MCF 10A (cell line): ENCODE measurements at regions of chr3 and their contacts with region 1.

Region 1: GRCh38 chr3:120095226-120095978 is 1.2 kb upstream of the GSK3B start:
- DNase-seq: peak; percentile 94
- H3K4me3 Mint-ChIP-seq: no peak overlapping the region
- H3K27ac Mint-ChIP-seq: no peak overlapping the region
- H3K4me1 Mint-ChIP-seq: peaks cover 13% of the 10 kb centered on the region
- H3K27me3 Mint-ChIP-seq: no peaks in the 10 kb centered on the region
- CTCF ChIP-seq: no peak

Region 2: GRCh38 chr3:119831022-119831421 is 264.4 kb before region 1 on chr3:
- CTCF ChIA-PET with region 1: no interaction called
- POLR2A ChIA-PET with region 1: no interaction called
- intact Hi-C with region 1: loop called (anchors 5 kb)
- DNase-seq: peak; percentile 10
- H3K4me3 Mint-ChIP-seq: no peak overlapping the region
- H3K27ac Mint-ChIP-seq: no peak overlapping the region
- H3K4me1 Mint-ChIP-seq: no peaks in the 10 kb centered on the region
- H3K27me3 Mint-ChIP-seq: no peaks in the 10 kb centered on the region
- CTCF ChIP-seq: no peak

Region 3: GRCh38 chr3:120081719-120082118 is 13.7 kb before region 1 on chr3:
- CTCF ChIA-PET with region 1: interaction called, 3 read pairs
- POLR2A ChIA-PET with region 1: interaction called, 31 read pairs
- intact Hi-C with region 1: no loop called
- DNase-seq: no peak
- H3K4me3 Mint-ChIP-seq: no peak overlapping the region
- H3K27ac Mint-ChIP-seq: no peak overlapping the region
- H3K4me1 Mint-ChIP-seq: peaks cover 54% of the 10 kb centered on the region
- H3K27me3 Mint-ChIP-seq: no peaks in the 10 kb centered on the region
- CTCF ChIP-seq: no peak

Region 4: DNA sequence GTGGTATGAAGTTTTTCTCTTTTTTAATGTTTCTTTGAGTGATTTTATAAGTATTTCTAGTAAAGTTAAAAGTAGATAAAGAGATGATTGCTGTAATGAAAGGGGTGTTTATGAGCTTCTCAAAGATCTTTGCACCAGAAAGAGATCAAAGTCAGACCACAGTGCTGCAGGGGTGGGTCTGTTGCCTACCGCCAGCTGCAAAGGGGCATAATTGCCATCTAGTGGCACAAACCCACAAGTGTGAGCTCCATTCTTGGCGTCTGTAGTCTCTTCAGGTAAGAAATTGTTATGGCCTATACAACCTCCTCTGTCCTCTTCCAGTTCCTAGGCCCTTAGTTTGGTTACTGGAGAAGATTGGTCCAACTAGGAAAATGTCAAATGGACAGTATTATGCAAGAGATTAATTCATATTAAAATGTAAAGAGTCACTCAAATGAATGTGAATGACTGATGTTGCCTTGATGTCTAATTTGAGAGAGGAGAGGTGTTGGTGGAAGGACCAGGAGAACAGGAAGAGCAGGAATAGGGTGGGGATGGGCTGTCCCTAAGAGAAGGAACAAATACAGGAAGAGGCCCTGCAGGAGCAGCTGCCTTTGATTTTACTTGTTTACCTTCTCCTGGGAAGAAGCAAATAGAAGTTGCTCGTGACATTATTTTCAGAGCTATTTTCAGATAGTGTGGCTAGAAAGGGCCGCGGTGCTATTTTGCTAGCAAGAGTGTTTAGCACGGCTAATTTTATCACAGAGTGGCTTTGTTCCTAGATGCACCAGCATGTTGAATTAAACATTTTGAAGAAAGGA is 51.9 kb after region 1 on chr3:
- CTCF ChIA-PET with region 1: interaction called, 5 read pairs
- POLR2A ChIA-PET with region 1: interaction called, 88 read pairs
- intact Hi-C with region 1: loop called (anchors 1 kb)
- DNase-seq: peak; percentile 39
- H3K4me3 Mint-ChIP-seq: no peak overlapping the region
- H3K27ac Mint-ChIP-seq: peak overlapping the region; percentile 49
- H3K4me1 Mint-ChIP-seq: peaks cover 35% of the 10 kb centered on the region
- H3K27me3 Mint-ChIP-seq: no peaks in the 10 kb centered on the region
- CTCF ChIP-seq: peak; percentile 10

Region 5: DNA sequence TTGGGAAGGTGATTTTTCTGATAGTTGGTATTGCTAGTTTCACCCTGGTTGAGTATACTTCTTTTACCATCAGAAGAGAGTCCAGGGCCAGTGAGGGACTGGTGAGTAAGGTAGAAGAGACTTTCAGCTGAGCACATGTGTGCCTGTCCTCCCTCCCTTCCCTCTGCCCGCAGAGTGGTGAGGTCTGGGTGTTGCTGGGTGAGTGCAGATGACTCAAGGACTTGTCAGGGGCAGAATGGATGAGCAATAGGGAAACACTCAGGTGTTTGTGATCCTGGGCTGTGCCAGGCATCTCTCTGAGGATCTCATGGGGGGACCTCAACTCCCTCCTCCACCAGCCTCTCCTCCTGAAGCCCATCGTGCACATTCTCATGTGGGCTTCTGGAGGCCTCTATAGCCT is 74.8 kb after region 1 on chr3:
- CTCF ChIA-PET with region 1: interaction called, 7 read pairs
- POLR2A ChIA-PET with region 1: interaction called, 174 read pairs
- intact Hi-C with region 1: no loop called
- DNase-seq: peak; percentile 93
- H3K4me3 Mint-ChIP-seq: peak overlapping the region; percentile 13
- H3K27ac Mint-ChIP-seq: peak overlapping the region; percentile 75
- H3K4me1 Mint-ChIP-seq: peaks cover 33% of the 10 kb centered on the region
- H3K27me3 Mint-ChIP-seq: no peaks in the 10 kb centered on the region
- CTCF ChIP-seq: no peak

Region 6: DNA sequence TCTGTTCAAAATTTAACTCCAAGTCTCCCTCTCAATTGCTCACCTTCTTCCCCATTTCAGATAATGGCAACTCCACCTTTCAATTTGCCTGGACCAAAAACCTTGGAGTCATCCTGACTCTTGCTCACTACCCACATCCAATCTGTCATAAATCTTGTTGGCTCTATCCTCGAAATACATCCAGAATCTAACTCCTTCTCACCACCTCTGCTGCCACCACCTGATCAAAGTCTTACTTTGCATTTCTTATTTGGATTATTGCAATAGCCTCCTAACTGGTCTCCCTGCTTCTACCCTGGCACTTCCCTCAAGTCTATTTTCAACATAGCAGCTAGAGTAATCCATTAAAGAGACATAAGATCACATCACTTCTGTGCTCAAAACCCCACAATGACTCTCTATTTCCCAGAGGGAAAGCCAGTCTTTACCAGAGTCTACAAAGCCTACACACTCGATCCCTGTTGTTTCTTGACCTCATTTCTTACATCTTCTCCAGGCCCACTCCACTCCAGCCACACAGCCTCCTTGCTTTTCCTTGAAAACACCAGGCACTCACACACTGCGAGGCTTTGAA is 103.0 kb after region 1 on chr3:
- CTCF ChIA-PET with region 1: interaction called, 3 read pairs
- POLR2A ChIA-PET with region 1: interaction called, 19 read pairs
- intact Hi-C with region 1: no loop called
- DNase-seq: peak; percentile 55
- H3K4me3 Mint-ChIP-seq: no peak overlapping the region
- H3K27ac Mint-ChIP-seq: no peak overlapping the region
- H3K4me1 Mint-ChIP-seq: peaks cover 6% of the 10 kb centered on the region
- H3K27me3 Mint-ChIP-seq: no peaks in the 10 kb centered on the region
- CTCF ChIP-seq: peak; percentile 41

Region 7: GRCh38 chr3:120289636-120290035 is 194.2 kb after region 1 on chr3:
- CTCF ChIA-PET with region 1: no interaction called
- POLR2A ChIA-PET with region 1: no interaction called
- intact Hi-C with region 1: no loop called
- DNase-seq: no peak
- H3K4me3 Mint-ChIP-seq: no peak overlapping the region
- H3K27ac Mint-ChIP-seq: no peak overlapping the region
- H3K4me1 Mint-ChIP-seq: no peaks in the 10 kb centered on the region
- H3K27me3 Mint-ChIP-seq: no peaks in the 10 kb centered on the region
- CTCF ChIP-seq: no peak